MCF 10A (cell line): ENCODE measurements at regions of chr10 and their contacts with region 1.

Region 1: DNA sequence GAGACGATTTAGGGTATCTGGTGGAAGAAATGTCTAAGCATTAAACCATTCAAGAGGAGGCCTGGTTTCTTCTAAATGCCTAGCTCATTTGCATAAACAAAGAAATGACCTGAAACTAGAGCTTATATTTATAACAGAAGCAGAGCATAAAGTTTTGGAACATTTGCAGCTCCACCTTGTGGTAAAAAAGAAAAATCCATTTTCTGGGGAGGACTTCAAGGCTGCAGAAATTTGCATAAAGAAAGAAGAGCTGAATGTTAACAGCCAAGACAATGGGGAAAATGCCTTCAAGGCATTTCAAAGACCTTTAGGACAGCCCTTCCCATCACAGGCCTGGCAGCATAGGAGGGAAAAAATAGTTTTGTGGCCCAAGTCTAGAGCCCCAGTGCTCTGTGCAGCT is 362.0 kb downstream of the ZNF248 start:
- DNase-seq: no peak
- H3K4me3 Mint-ChIP-seq: no peak overlapping the region
- H3K27ac Mint-ChIP-seq: no peak overlapping the region
- H3K4me1 Mint-ChIP-seq: peaks cover 2% of the 10 kb centered on the region
- H3K27me3 Mint-ChIP-seq: no peaks in the 10 kb centered on the region
- CTCF ChIP-seq: peak; percentile 37

Region 2: GRCh38 chr10:36888929-36889573 is 606.4 kb before region 1 on chr10:
- CTCF ChIA-PET with region 1: interaction called, 12 read pairs
- POLR2A ChIA-PET with region 1: no interaction called
- intact Hi-C with region 1: no loop called
- DNase-seq: peak; percentile 51
- H3K4me3 Mint-ChIP-seq: no peak overlapping the region
- H3K27ac Mint-ChIP-seq: no peak overlapping the region
- H3K4me1 Mint-ChIP-seq: no peaks in the 10 kb centered on the region
- H3K27me3 Mint-ChIP-seq: no peaks in the 10 kb centered on the region
- CTCF ChIP-seq: peak; percentile 33

Region 3: DNA sequence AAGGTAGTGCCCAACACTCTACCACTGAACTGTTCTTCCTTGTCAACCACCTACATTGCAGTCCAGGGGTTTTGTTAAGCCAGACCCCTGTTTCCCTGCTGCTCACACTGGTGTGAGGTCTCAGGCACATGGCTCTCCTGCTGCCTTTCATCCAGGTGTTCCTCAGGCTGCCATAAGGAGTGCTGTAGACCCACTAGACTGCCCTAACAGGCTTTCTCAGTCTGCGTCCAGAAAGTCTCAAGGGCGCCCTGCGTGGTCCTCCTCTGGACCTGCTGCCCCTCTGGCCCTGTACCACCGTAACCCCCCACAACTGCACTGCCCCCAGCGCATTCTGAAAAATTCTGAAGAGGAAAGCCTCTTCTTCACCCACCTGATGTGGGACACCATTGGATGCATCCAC is 595.8 kb before region 1 on chr10:
- CTCF ChIA-PET with region 1: interaction called, 45 read pairs
- POLR2A ChIA-PET with region 1: no interaction called
- intact Hi-C with region 1: no loop called
- DNase-seq: no peak
- H3K4me3 Mint-ChIP-seq: no peak overlapping the region
- H3K27ac Mint-ChIP-seq: no peak overlapping the region
- H3K4me1 Mint-ChIP-seq: no peaks in the 10 kb centered on the region
- H3K27me3 Mint-ChIP-seq: peaks cover 11% of the 10 kb centered on the region
- CTCF ChIP-seq: no peak

Region 4: GRCh38 chr10:37246639-37247038 is 248.8 kb before region 1 on chr10:
- CTCF ChIA-PET with region 1: interaction called, 10 read pairs
- POLR2A ChIA-PET with region 1: no interaction called
- intact Hi-C with region 1: no loop called
- DNase-seq: no peak
- H3K4me3 Mint-ChIP-seq: no peak overlapping the region
- H3K27ac Mint-ChIP-seq: no peak overlapping the region
- H3K4me1 Mint-ChIP-seq: no peaks in the 10 kb centered on the region
- H3K27me3 Mint-ChIP-seq: peaks cover 82% of the 10 kb centered on the region
- CTCF ChIP-seq: no peak

Region 5: GRCh38 chr10:37434091-37434490 is 61.3 kb before region 1 on chr10:
- CTCF ChIA-PET with region 1: interaction called, 63 read pairs
- POLR2A ChIA-PET with region 1: no interaction called
- intact Hi-C with region 1: loop called (anchors 1 kb)
- DNase-seq: no peak
- H3K4me3 Mint-ChIP-seq: no peak overlapping the region
- H3K27ac Mint-ChIP-seq: no peak overlapping the region
- H3K4me1 Mint-ChIP-seq: peaks cover 9% of the 10 kb centered on the region
- H3K27me3 Mint-ChIP-seq: no peaks in the 10 kb centered on the region
- CTCF ChIP-seq: peak; percentile 33

Region 6: DNA sequence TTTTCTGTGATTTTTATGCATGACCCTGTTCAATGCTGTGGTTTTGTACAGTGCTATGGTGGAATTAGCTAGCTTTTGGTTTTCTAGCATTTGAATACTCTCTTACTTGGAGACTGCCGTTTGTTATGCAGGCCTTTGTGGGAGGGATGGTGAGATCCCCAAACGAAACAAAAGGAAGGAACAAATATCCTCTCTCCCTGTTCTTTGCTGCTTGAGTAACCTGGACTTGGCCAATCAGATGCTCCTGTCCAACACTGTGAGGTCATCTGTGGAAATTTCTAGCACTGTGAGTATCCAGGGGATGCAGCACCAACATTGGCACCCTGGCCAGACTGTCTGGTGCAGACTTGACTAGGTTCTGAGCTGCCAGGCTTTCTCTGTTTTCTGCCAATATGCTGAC is 55.6 kb before region 1 on chr10:
- CTCF ChIA-PET with region 1: interaction called, 63 read pairs
- POLR2A ChIA-PET with region 1: no interaction called
- intact Hi-C with region 1: no loop called
- DNase-seq: no peak
- H3K4me3 Mint-ChIP-seq: no peak overlapping the region
- H3K27ac Mint-ChIP-seq: no peak overlapping the region
- H3K4me1 Mint-ChIP-seq: peaks cover 9% of the 10 kb centered on the region
- H3K27me3 Mint-ChIP-seq: no peaks in the 10 kb centered on the region
- CTCF ChIP-seq: no peak